A673 (cell line): ENCODE measurements at regions of chr12 and their contacts with region 1.

Region 1: DNA sequence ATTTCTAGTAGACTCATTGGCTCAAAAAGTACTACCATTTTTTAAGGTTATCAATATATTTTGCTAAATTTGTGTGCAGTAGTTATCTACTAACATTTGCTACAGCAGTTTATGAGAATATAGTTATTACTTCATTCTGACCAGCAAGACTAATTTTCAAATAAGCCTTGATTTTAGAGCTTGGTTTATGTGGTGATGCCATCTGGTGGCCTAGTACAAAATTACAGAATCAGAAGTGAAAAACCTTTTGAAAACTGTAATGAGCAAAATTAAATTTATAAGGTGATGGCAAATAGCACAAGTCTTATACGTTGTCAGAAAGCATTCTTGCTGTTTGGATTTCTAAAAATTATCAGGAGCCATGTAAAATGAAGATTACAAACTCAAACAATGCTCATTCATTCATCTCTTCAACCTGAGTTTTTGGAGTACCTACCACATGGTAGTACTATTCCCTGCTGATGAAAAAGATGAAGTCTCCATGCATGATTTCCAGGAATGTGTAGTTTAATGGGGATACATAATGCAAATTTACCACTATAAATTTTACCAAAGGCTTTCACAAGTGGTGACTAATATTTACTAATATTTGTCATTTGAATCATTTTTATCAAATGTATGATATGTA is 51.0 kb downstream of the MAGOHB start:
- DNase-seq: peak; percentile 47
- H3K4me3 ChIP-seq: no peak overlapping the region
- H3K27ac ChIP-seq: no peak overlapping the region
- H3K4me1 ChIP-seq: no peaks in the 10 kb centered on the region
- H3K27me3 ChIP-seq: no peaks in the 10 kb centered on the region
- CTCF ChIP-seq: peak; percentile 72

Region 2: GRCh38 chr12:10033783-10034545 is 528.5 kb before region 1 on chr12:
- CTCF ChIA-PET with region 1: no interaction called
- POLR2A ChIA-PET with region 1: no interaction called
- intact Hi-C with region 1: loop called (anchors 10 kb)
- DNase-seq: peak; percentile 30
- H3K4me3 ChIP-seq: no peak overlapping the region
- H3K27ac ChIP-seq: no peak overlapping the region
- H3K4me1 ChIP-seq: no peaks in the 10 kb centered on the region
- H3K27me3 ChIP-seq: no peaks in the 10 kb centered on the region
- CTCF ChIP-seq: peak; percentile 64

Region 3: GRCh38 chr12:10153271-10154144 is 408.9 kb before region 1 on chr12:
- CTCF ChIA-PET with region 1: no interaction called
- POLR2A ChIA-PET with region 1: no interaction called
- intact Hi-C with region 1: loop called (anchors 5 kb)
- DNase-seq: peak; percentile 74
- H3K4me3 ChIP-seq: peak overlapping the region; percentile 48
- H3K27ac ChIP-seq: peak overlapping the region; percentile 25
- H3K4me1 ChIP-seq: no peaks in the 10 kb centered on the region
- H3K27me3 ChIP-seq: no peaks in the 10 kb centered on the region
- CTCF ChIP-seq: peak; percentile 82

Region 4: GRCh38 chr12:10249690-10250455 is 312.5 kb before region 1 on chr12:
- CTCF ChIA-PET with region 1: no interaction called
- POLR2A ChIA-PET with region 1: interaction called, 25 read pairs
- intact Hi-C with region 1: no loop called
- DNase-seq: no peak
- H3K4me3 ChIP-seq: no peak overlapping the region
- H3K27ac ChIP-seq: no peak overlapping the region
- H3K4me1 ChIP-seq: peaks cover 4% of the 10 kb centered on the region
- H3K27me3 ChIP-seq: no peaks in the 10 kb centered on the region
- CTCF ChIP-seq: no peak

Region 5: GRCh38 chr12:10293570-10294227 is 268.7 kb before region 1 on chr12:
- CTCF ChIA-PET with region 1: no interaction called
- POLR2A ChIA-PET with region 1: no interaction called
- intact Hi-C with region 1: no loop called
- DNase-seq: no peak
- H3K4me3 ChIP-seq: no peak overlapping the region
- H3K27ac ChIP-seq: no peak overlapping the region
- H3K4me1 ChIP-seq: no peaks in the 10 kb centered on the region
- H3K27me3 ChIP-seq: no peaks in the 10 kb centered on the region
- CTCF ChIP-seq: no peak

Region 6: DNA sequence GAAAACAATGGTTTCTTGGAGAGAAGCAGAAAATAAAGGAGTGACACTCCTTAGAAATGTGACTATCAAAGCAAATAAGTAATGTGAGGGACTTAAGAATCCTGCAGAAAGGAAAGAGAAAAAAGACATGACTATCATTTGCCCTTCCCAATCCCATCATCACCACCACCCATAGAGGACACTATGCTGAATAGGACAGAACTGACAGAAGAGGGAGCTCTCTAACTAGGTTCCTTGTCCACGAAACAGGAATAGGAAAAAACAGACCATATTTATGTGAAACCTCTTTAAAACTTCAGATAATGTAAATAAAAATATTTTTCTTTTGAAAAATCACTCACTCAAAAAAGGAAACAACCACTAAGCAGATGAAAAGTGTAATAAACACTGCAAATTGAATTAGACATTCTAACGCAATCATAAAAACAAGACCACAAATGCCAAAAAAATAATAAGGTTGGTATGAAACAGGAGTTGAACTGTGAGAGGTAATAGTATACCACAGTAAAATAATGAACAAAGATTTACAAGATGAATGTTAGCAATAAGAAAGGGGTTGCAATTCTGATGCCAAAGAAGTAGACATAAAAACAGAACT is 230.7 kb before region 1 on chr12:
- CTCF ChIA-PET with region 1: no interaction called
- POLR2A ChIA-PET with region 1: no interaction called
- intact Hi-C with region 1: loop called (anchors 5 kb)
- DNase-seq: peak; percentile 60
- H3K4me3 ChIP-seq: no peak overlapping the region
- H3K27ac ChIP-seq: no peak overlapping the region
- H3K4me1 ChIP-seq: no peaks in the 10 kb centered on the region
- H3K27me3 ChIP-seq: no peaks in the 10 kb centered on the region
- CTCF ChIP-seq: peak; percentile 74

Region 7: GRCh38 chr12:10701131-10701681 is 138.8 kb after region 1 on chr12:
- CTCF ChIA-PET with region 1: no interaction called
- POLR2A ChIA-PET with region 1: no interaction called
- intact Hi-C with region 1: no loop called
- DNase-seq: no peak
- H3K4me3 ChIP-seq: no peak overlapping the region
- H3K27ac ChIP-seq: no peak overlapping the region
- H3K4me1 ChIP-seq: no peaks in the 10 kb centered on the region
- H3K27me3 ChIP-seq: no peaks in the 10 kb centered on the region
- CTCF ChIP-seq: no peak